ENCODE measurements at regions of chr2 and their contacts with region 1.

Region 1: GRCh38 chr2:86079981-86080911 is 25.4 kb downstream of the POLR1A start:
- H3K4me3 Mint-ChIP-seq: no peak overlapping the region
- H3K27ac Mint-ChIP-seq: peak overlapping the region; percentile 65
- H3K4me1 Mint-ChIP-seq: peaks cover 19% of the 10 kb centered on the region
- H3K27me3 Mint-ChIP-seq: no peaks in the 10 kb centered on the region

Region 2: GRCh38 chr2:85826990-85827878 is 253.0 kb before region 1 on chr2:
- intact Hi-C with region 1: loop called (anchors 1 kb)
- H3K4me3 Mint-ChIP-seq: no peak overlapping the region
- H3K27ac Mint-ChIP-seq: no peak overlapping the region
- H3K4me1 Mint-ChIP-seq: peaks cover 16% of the 10 kb centered on the region
- H3K27me3 Mint-ChIP-seq: peaks cover 7% of the 10 kb centered on the region

Region 3: GRCh38 chr2:86017901-86018896 is 62.0 kb before region 1 on chr2:
- intact Hi-C with region 1: no loop called
- H3K4me3 Mint-ChIP-seq: no peak overlapping the region
- H3K27ac Mint-ChIP-seq: peak overlapping the region; percentile 79
- H3K4me1 Mint-ChIP-seq: peaks cover 62% of the 10 kb centered on the region
- H3K27me3 Mint-ChIP-seq: no peaks in the 10 kb centered on the region